Motor neuron (in vitro differentiated cells): ENCODE measurements at regions of chr5 and their contacts with region 1.

Region 1: DNA sequence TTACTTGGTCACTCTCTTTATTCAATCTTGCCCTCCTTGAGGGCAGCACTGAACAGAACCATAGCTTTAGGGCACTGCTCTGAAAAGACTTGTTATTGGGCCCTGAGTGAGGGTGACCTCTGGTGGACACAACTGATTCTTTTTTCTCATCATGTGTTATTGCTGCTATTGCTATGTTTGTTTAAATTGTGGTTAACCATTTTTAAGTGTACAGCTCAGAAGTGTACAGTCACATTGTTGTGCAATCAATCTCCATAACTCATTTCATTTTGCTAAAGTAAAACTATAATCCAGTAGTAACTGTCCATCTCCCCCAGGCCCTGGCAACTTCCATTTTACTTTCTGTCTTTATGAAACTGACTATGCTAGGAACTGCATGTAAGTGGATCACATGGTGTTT is 351.1 kb upstream of the RIOK2 start:
- ATAC-seq: peak in 4 of 8 experiments; percentile 39 to 93 (median 88)
- H3K4me3 ChIP-seq: no peak overlapping the region
- H3K27ac ChIP-seq: no peak overlapping the region
- H3K4me1 ChIP-seq: peaks cover 2 to 9% of the 10 kb centered on the region in 2 donors

Region 2: DNA sequence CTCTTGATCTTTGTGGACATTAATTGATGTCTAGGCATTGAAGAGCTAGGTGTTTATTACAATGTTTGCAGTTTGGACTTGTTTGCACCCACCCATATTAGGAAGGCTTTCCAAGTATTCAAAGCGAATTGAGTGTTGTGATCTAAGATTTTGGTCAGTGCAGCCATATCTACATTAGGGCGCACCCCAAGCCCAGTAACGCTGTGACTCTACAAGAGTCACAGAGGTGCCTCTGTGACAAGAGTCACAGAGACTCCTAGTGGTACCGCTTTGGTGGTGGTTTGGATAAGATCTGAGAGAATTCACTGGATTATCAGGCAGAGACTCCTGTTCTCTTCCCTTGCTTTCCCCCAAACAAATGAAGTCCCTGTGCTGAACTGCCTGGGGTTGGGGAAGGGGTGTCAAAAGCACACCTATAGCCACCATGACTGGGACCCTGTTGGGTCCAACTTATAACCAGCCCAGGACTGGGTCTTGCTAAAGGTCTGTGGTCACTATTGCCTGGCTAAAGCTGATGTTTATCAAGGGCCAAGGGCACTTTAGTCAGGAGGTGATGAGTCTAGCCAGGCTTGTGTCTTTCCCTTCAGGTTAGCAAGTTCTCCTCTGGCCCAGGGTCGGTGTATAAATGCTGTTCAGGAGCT is 237.0 kb before region 1 on chr5:
- in situ Hi-C with region 1: loop called in 1 of 9 experiments (anchors 10 kb)
- ATAC-seq: peak; percentile 67 to 100 (median 90)
- H3K4me3 ChIP-seq: no peak overlapping the region
- H3K27ac ChIP-seq: no peak overlapping the region
- H3K4me1 ChIP-seq: no peaks in the 10 kb centered on the region